A549 (cell line): ENCODE measurements at regions of chr9 and their contacts with region 1.

Region 1: GRCh38 chr9:347667-348292 is 133.1 kb downstream of the DOCK8 start:
- DNase-seq: peak; percentile 35 to 54
- ATAC-seq: peak; percentile 60 to 87; a peak in 4 of 6 replicates
- H3K4me3 ChIP-seq: no peak overlapping the region
- H3K27ac ChIP-seq: no peak overlapping the region
- H3K4me1 ChIP-seq: no peaks in the 10 kb centered on the region
- CTCF ChIP-seq: peak; percentile 93
- EP300 ChIP-seq: no peak
- POLR2A ChIP-seq: no peak
- RAD21 ChIP-seq: peak; percentile 88 to 92

Region 2: GRCh38 chr9:336039-336438 is 11.7 kb before region 1 on chr9:
- CTCF ChIA-PET with region 1: interaction called, 33 read pairs
- POLR2A ChIA-PET with region 1: no interaction called
- DNase-seq: peak in 1 of 2 experiments; percentile 21
- ATAC-seq: peak in 1 of 2 experiments; percentile 76; a peak in 3 of 6 replicates
- H3K4me3 ChIP-seq: no peak overlapping the region
- H3K27ac ChIP-seq: no peak overlapping the region
- H3K4me1 ChIP-seq: peaks cover 6% of the 10 kb centered on the region; the same call in 2 of the 3 replicates
- CTCF ChIP-seq: no peak
- EP300 ChIP-seq: no peak
- POLR2A ChIP-seq: no peak
- RAD21 ChIP-seq: no peak

Region 3: DNA sequence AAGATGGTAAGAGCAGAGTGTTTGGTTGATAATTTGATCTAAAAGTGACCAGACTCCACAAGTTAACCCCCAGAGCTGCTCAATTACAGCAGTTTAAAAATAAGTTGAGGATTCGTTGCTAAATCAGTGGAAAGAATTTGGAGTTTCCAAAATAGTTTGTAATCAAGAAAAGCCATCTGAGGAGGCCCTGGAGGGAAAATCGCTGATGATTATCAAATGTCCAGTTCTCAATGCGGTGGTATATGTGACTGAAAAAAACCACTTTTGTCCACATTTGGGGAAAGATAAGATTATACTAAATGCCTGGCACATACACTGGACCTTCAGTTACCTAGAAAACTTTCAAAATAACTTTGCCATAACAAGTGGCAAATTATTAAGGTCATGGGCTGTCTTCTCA is 15.2 kb after region 1 on chr9:
- CTCF ChIA-PET with region 1: interaction called, 12 read pairs
- POLR2A ChIA-PET with region 1: no interaction called
- DNase-seq: no peak
- ATAC-seq: no peak
- H3K4me3 ChIP-seq: no peak overlapping the region
- H3K27ac ChIP-seq: no peak overlapping the region
- H3K4me1 ChIP-seq: no peaks in the 10 kb centered on the region
- CTCF ChIP-seq: no peak
- EP300 ChIP-seq: no peak
- POLR2A ChIP-seq: no peak
- RAD21 ChIP-seq: no peak

Region 4: DNA sequence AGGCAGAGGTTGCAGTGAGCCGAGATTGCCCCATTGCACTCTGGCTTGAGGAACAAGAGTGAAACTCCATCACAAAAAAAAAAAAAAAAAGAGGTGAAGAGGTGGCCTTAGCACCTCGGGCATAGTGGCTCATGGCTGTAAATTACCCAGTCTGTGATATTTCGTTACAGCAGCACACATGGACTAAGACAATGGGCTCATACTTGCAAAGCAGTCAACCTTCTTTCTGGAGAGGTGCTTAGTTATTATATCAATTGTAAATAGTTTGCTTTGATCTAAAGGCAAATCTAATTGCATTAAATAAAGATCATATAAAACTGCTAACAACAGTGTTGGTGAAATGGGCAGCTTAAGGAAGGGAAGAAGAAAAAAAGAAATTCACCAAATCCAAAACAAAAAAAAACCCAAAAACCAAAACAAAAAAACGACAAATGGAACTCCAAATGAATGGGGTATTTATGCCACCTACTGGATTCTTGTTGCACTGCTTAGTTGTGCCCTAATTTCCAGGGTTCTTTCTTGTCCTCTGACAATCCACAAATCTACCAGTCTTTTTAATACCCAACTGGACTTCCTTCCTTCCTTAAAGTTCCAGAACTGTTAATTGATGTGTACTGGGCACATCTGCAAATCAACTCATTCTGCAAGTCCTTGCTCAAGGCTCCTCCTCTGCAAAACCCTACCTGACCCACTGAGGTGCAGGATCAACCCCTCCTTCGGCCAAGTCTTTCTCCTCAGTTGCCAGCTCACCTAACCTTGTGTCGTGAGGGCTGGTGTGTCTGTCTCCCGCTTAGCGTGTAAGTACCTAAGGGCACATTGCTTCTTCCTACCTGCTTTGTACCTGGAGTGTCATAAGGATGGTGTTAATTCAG is 458.7 kb after region 1 on chr9:
- CTCF ChIA-PET with region 1: interaction called, 14 read pairs
- POLR2A ChIA-PET with region 1: no interaction called
- DNase-seq: peak; percentile 48 to 50
- ATAC-seq: peak in 1 of 2 experiments; percentile 77; a peak in 3 of 6 replicates
- H3K4me3 ChIP-seq: no peak overlapping the region
- H3K27ac ChIP-seq: no peak overlapping the region
- H3K4me1 ChIP-seq: peaks cover 12% of the 10 kb centered on the region
- CTCF ChIP-seq: peak; percentile 76
- EP300 ChIP-seq: no peak
- POLR2A ChIP-seq: no peak
- RAD21 ChIP-seq: peak; percentile 79 to 81

Region 5: DNA sequence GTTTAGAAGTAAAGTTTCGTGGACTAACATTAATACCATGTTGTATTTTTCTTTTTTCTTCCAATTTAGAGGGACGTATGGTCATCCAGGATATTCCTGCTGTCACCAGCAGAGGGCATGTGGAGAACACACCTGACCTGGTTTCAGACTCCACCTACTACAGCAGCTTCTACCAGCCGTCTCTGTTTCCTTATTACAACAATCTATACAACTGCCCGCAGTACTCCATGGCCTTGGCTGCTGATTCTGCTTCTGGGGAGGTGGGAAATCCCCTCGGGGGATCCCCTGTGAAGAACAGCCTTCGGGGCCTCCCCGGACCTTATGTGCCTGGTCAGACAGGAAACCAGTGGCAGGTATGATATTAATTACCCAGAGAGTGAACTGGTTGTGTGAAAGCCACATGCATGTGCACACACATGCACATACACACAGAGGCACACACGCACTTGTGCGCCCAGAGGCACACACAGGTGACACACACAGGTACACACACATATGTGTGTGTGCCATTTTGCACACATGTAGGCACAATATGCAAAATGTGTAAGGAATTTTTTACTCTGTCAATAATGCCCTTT is 546.2 kb after region 1 on chr9:
- CTCF ChIA-PET with region 1: interaction called, 12 read pairs
- POLR2A ChIA-PET with region 1: no interaction called
- DNase-seq: peak; percentile 58 to 74
- ATAC-seq: peak; percentile 94 to 96
- H3K4me3 ChIP-seq: no peak overlapping the region
- H3K27ac ChIP-seq: no peak overlapping the region
- H3K4me1 ChIP-seq: no peaks in the 10 kb centered on the region
- CTCF ChIP-seq: peak; percentile 86
- EP300 ChIP-seq: no peak
- POLR2A ChIP-seq: no peak
- RAD21 ChIP-seq: peak; percentile 76 to 81

Region 6: DNA sequence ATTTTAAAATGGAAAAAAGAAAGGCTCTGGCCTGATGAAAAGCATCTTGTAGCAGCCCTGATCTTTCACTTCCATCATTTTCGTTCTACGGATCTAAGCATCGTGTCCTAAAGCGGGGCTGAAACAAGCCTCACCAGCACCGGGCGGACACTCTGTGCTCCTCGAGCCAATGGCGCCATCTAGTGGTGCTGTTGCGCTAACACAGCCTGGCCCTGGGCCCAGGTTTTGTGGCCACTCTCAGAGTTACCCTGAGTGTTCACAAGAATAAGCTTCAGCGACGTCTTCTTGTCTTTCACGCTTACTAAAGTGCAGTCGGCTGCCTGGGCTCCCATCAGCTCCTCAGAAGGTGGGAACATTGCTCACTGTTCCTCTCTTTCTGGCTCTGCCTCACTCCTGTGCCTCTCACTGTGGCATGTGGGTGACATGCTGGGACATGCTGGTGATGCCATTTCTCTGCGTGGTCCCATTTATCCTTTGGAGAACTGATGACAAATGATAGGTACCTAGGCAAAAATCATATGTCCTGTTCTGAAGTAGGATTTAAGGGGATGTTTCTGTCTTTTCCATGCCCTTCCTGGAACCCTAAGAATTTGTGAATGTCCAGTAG is 661.4 kb after region 1 on chr9:
- CTCF ChIA-PET with region 1: interaction called, 24 read pairs
- POLR2A ChIA-PET with region 1: no interaction called
- DNase-seq: peak; percentile 59 to 76
- ATAC-seq: peak; percentile 93 to 99
- H3K4me3 ChIP-seq: no peak overlapping the region
- H3K27ac ChIP-seq: 0 out of 6 replicates have a peak overlapping the region, but pooled peaks of 1 of the 2 experiments have one; percentile 30
- H3K4me1 ChIP-seq: 0 out of 3 replicates have a peak, but pooled peaks cover 3% of the 10 kb centered on the region
- CTCF ChIP-seq: peak; percentile 81
- EP300 ChIP-seq: no peak
- POLR2A ChIP-seq: no peak
- RAD21 ChIP-seq: peak; percentile 89 to 93